Panc1 (cell line): ENCODE measurements at regions of chr6 and their contacts with region 1.

Region 1: DNA sequence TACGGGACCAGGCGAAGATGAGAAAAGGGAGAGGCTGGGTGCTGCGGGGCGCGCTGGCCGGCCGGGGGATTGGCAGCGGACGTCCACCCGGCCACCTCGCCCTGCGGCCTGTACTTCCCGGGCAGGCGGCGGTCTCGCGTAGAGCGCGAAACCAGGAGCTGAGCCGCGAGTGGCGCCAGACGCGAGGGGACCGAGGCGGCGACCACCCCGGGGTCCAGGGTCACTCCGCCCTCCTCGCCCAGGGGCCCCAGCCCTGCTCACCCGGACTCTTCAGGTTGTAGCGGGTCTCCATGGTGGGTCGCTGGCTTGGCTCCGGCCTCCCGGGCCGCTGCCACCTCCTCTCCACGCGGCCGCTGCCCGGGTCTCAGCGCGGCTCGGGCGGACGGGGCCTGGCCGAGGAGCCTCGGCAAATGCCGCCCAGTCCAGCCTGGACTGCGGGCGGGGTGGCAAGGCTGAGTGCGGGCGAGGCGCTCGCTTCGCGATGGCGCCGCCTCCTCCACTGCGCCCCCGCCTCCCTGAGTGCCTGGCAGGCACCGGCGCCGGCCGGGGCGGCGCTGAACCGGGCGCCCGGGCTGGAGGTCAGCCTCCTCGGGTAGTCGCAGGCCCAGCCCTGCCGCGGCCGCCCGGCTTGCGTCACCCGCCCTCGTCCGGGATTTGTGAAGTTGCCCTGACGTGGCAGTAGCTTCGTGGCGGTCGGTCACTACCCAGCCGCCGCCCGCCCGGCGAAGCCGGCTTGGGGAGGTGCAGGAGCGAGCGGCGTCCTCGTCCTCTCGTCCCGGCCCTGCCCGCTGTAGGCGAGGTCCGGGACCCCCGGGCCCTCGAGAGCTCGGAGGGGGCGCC is at the start of gene UBE2J1:
- DNase-seq: no peak
- ATAC-seq: peak; percentile 98
- H3K4me3 ChIP-seq: peak within 1 kb of the TSS; percentile 73 to 96
- H3K27ac ChIP-seq: peak within 1 kb of the TSS; percentile 86
- H3K4me1 ChIP-seq: peaks cover 11% of the 10 kb centered on the region
- H3K27me3 ChIP-seq: no peaks in the 10 kb centered on the region
- CTCF ChIP-seq: no peak
- total RNA-seq, gene UBE2J1: 30.5 TPM

Region 2: DNA sequence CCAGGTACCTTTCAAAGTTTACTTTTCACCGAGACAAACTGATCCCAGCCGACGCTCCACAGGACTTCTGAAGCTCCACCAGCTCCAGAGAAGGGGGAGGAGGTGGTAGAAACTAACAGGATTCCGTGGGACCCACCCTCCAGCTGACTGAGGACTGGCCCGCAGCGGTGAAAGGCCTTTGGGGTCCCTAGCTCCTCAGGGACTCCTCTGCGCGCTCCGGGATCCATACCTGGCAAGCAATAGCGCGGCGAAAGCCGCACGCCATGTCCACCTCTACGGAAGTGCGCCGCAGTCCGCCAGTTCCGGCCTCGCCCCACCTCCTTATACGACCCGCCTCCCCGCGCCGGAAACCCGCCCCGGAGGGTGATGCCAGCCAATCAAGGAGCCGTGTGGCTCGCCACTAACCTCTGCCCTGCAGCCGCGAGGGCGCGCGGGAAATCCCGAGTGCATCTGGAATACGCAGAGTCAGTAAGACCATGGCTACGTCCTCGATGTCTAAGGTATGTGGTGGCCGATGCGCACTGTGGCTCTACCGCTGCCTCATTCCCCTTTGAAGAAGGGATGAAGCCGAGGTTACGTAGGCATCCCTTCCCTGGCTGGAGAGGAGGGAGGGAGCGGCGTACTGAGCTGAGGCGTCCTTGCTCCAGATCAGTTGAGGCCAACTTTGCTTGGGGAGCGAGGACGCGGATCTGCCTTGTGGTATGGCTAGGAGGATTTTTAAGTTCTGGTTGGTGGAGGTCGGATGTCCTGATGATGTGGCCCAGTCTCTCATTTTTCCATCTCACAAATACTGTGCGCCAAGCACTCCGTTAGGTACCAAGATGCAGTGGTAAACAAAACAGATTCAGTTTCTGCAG is 1762.6 kb before region 1 on chr6 and contains the starts of genes ORC3 and RARS2:
- CTCF ChIA-PET with region 1: no interaction called
- POLR2A ChIA-PET with region 1: interaction called, 13 read pairs
- in situ Hi-C with region 1: no loop called
- intact Hi-C with region 1: no loop called
- DNase-seq: peak; percentile 72
- ATAC-seq: peak; percentile 100
- H3K4me3 ChIP-seq: peak within 1 kb of the TSS; percentile 95 to 100
- H3K27ac ChIP-seq: peak within 1 kb of the TSS; percentile 98
- H3K4me1 ChIP-seq: peaks cover 4% of the 10 kb centered on the region; the same call in 1 of the 2 replicates
- H3K27me3 ChIP-seq: no peaks in the 10 kb centered on the region
- CTCF ChIP-seq: no peak
- total RNA-seq, gene ORC3: 36.9 TPM
- total RNA-seq, gene RARS2: 38.3 TPM

Region 3: GRCh38 chr6:89080542-89081422 is 271.7 kb before region 1 on chr6 and contains the start of gene PNRC1:
- CTCF ChIA-PET with region 1: no interaction called
- POLR2A ChIA-PET with region 1: interaction called, 12 read pairs
- in situ Hi-C with region 1: no loop called
- intact Hi-C with region 1: no loop called
- DNase-seq: peak; percentile 90
- ATAC-seq: peak; percentile 93
- H3K4me3 ChIP-seq: peak within 1 kb of the TSS; percentile 92 to 94
- H3K27ac ChIP-seq: peak within 1 kb of the TSS; percentile 98
- H3K4me1 ChIP-seq: peaks cover 16% of the 10 kb centered on the region
- H3K27me3 ChIP-seq: no peaks in the 10 kb centered on the region
- CTCF ChIP-seq: no peak
- total RNA-seq, gene PNRC1: 63.5 TPM

Region 4: GRCh38 chr6:89400912-89401399 is 48.5 kb after region 1 on chr6:
- CTCF ChIA-PET with region 1: no interaction called
- POLR2A ChIA-PET with region 1: interaction called, 18 read pairs
- in situ Hi-C with region 1: no loop called
- intact Hi-C with region 1: no loop called
- DNase-seq: no peak
- ATAC-seq: 0 out of 2 replicates have a peak, but pooled peaks have one; percentile 60
- H3K4me3 ChIP-seq: no peak overlapping the region
- H3K27ac ChIP-seq: no peak overlapping the region
- H3K4me1 ChIP-seq: no peaks in the 10 kb centered on the region
- H3K27me3 ChIP-seq: no peaks in the 10 kb centered on the region
- CTCF ChIP-seq: no peak

Region 5: DNA sequence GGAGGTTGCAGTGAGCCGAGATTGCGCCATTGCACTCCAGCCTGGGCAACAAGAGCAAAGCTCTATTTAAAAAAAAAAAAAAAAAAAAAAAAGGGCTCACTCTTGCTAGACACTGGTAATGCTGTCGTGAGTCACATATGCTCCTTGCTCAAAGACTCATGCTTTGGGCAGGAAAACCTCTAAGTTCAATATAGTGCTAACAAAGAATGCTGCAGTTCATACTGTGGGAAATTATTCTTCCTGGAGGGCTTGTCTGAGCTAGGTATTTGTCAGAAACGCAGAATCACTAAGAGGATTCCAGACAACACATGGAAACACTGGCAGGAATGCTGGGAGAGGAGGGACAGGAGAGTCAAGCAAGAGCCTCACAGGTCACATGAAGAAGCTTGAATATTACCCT is 288.3 kb after region 1 on chr6:
- CTCF ChIA-PET with region 1: no interaction called
- POLR2A ChIA-PET with region 1: interaction called, 10 read pairs
- in situ Hi-C with region 1: no loop called
- intact Hi-C with region 1: no loop called
- DNase-seq: no peak
- ATAC-seq: no peak
- H3K4me3 ChIP-seq: no peak overlapping the region
- H3K27ac ChIP-seq: no peak overlapping the region
- H3K4me1 ChIP-seq: no peaks in the 10 kb centered on the region
- H3K27me3 ChIP-seq: no peaks in the 10 kb centered on the region
- CTCF ChIP-seq: no peak